Activated CD4-positive, alpha-beta T cell treated with anti-CD3 and anti-CD28 coated beads, Interleukin-2, amount 10 ng/mL, durations not matched to agents 24 days and 14 days (primary cell): ENCODE measurements at regions of chr5 and their contacts with region 1.

Region 1: GRCh38 chr5:143101121-143101520 is 302.4 kb downstream of the NR3C1 start:
- DNase-seq: peak; percentile 76
- H3K4me3 Mint-ChIP-seq: peak overlapping the region; percentile 58
- H3K27ac Mint-ChIP-seq: peak overlapping the region; percentile 92
- H3K4me1 Mint-ChIP-seq: peaks cover 46% of the 10 kb centered on the region
- H3K27me3 Mint-ChIP-seq: no peaks in the 10 kb centered on the region

Region 2: DNA sequence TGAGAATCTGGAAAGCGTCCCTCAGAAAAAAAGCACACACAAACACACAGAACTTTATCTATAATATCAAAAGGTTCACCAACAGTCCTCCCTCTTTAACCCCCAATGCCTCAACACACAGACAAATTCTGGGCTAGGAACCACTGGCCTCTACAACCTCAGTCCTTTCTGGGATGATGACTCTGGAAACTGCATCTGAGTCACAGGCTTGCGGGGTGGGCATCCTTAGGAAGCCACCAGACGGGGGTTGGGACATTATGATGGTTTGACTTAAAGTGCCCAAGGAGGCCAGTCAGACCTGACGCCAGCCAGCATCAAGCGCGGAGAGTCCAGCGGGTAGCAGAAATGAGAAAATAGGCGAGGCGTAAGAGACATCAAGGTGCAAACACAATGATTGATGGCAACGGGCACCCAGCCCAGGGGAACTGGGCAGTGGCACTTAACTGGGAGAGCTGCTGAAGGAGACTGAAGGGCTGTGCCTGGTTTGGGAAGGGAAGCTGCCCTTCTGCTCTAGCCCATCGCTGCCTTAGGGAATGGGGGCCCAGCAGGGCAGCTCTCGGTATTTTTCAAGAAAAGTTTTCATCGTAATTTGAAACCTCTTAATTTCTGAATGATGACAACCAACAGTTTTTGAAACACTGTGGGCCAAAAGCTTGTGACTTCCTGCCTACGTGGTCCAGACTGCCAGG is 797.0 kb before region 1 on chr5:
- intact Hi-C with region 1: no loop called
- DNase-seq: no peak
- H3K4me3 Mint-ChIP-seq: no peak overlapping the region
- H3K27ac Mint-ChIP-seq: no peak overlapping the region
- H3K4me1 Mint-ChIP-seq: peaks cover 4% of the 10 kb centered on the region
- H3K27me3 Mint-ChIP-seq: no peaks in the 10 kb centered on the region

Region 3: GRCh38 chr5:143008809-143009521 is 92.2 kb before region 1 on chr5:
- intact Hi-C with region 1: loop called (anchors 1 kb)
- DNase-seq: peak; percentile 94
- H3K4me3 Mint-ChIP-seq: peak overlapping the region; percentile 36
- H3K27ac Mint-ChIP-seq: peak overlapping the region; percentile 93
- H3K4me1 Mint-ChIP-seq: peaks cover 73% of the 10 kb centered on the region
- H3K27me3 Mint-ChIP-seq: peaks cover 3% of the 10 kb centered on the region

Region 4: DNA sequence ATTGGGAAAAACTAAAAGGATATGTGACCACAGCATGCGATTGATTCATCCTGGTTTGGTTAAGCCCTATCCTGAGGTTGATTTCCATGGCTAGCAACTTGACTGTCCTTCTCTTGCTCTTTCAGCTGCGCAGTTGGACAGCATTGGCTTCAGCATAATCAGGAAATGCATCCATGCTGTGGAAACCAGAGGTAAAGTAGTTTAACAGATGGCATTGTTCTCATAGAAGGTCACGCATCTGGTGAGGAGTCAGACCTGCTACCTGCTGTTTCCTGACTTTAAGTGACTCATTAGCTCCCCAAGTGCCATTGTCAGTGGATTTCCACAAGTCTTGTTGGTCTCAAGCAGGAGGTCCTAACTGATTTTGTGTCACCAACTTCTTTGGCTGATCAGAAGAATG is 64.0 kb before region 1 on chr5:
- intact Hi-C with region 1: loop called (anchors 1 kb)
- DNase-seq: no peak
- H3K4me3 Mint-ChIP-seq: no peak overlapping the region
- H3K27ac Mint-ChIP-seq: peak overlapping the region; percentile 86
- H3K4me1 Mint-ChIP-seq: peaks cover 47% of the 10 kb centered on the region
- H3K27me3 Mint-ChIP-seq: no peaks in the 10 kb centered on the region

Region 5: GRCh38 chr5:143066556-143067281 is 34.4 kb before region 1 on chr5:
- intact Hi-C with region 1: loop called (anchors 1 kb)
- DNase-seq: no peak
- H3K4me3 Mint-ChIP-seq: peak overlapping the region; percentile 29
- H3K27ac Mint-ChIP-seq: peak overlapping the region; percentile 87
- H3K4me1 Mint-ChIP-seq: peaks cover 30% of the 10 kb centered on the region
- H3K27me3 Mint-ChIP-seq: no peaks in the 10 kb centered on the region

Region 6: GRCh38 chr5:143177263-143177983 is 76.3 kb after region 1 on chr5:
- intact Hi-C with region 1: no loop called
- DNase-seq: no peak
- H3K4me3 Mint-ChIP-seq: no peak overlapping the region
- H3K27ac Mint-ChIP-seq: no peak overlapping the region
- H3K4me1 Mint-ChIP-seq: peaks cover 21% of the 10 kb centered on the region
- H3K27me3 Mint-ChIP-seq: no peaks in the 10 kb centered on the region

Region 7: GRCh38 chr5:143213851-143214363 is 112.8 kb after region 1 on chr5:
- intact Hi-C with region 1: loop called (anchors 2 kb)
- DNase-seq: no peak
- H3K4me3 Mint-ChIP-seq: peak overlapping the region; percentile 24
- H3K27ac Mint-ChIP-seq: peak overlapping the region; percentile 76
- H3K4me1 Mint-ChIP-seq: peaks cover 28% of the 10 kb centered on the region
- H3K27me3 Mint-ChIP-seq: no peaks in the 10 kb centered on the region

Region 8: DNA sequence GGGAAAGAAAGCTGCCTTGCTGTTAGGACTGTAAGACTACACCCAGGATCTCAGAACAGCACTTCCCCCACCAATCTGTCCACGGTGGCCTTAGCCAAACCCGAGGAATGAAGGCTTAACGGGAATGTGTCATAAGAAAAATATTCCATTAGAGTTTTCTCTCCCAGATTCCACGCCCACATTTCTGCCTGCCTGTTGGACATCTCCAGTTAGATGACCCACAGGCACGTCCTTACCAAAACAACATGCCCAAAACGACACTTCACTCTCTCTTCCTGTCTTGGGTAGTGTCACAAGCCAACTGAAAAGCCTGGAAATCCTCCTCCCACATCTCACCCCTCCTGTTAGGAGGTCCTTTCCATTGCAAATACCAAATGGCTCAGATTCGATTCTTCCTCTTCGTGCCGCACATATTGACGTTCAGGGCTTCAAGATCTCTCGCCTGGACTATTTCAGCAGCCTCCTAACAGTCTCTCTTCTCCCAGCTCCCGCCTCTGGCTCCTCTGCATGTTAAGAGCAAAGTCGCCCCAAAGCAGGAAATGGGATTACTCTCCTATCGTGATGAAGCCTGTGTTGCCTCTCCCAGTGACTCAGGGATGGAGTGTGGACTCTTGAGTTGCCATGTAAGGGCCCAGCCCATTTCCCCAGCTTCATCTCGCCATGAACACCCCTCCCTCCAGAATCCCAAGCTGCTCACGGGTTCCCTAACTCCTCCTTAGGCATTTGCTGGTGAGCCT is 143.0 kb after region 1 on chr5:
- intact Hi-C with region 1: no loop called
- DNase-seq: no peak
- H3K4me3 Mint-ChIP-seq: no peak overlapping the region
- H3K27ac Mint-ChIP-seq: no peak overlapping the region
- H3K4me1 Mint-ChIP-seq: no peaks in the 10 kb centered on the region
- H3K27me3 Mint-ChIP-seq: no peaks in the 10 kb centered on the region